Aorta (tissue), 5 donors: ENCODE measurements at regions of chr16 and their contacts with region 1.

Region 1: GRCh38 chr16:78503602-78504001 is 404.1 kb downstream of the WWOX start:
- DNase-seq: no peak
- ATAC-seq: no peak
- H3K4me3 ChIP-seq: no peak overlapping the region
- H3K27ac ChIP-seq: no peak overlapping the region
- H3K4me1 ChIP-seq: peaks cover 2 to 4% of the 10 kb centered on the region in 2 donors
- H3K27me3 ChIP-seq: no peaks in the 10 kb centered on the region

Region 2: DNA sequence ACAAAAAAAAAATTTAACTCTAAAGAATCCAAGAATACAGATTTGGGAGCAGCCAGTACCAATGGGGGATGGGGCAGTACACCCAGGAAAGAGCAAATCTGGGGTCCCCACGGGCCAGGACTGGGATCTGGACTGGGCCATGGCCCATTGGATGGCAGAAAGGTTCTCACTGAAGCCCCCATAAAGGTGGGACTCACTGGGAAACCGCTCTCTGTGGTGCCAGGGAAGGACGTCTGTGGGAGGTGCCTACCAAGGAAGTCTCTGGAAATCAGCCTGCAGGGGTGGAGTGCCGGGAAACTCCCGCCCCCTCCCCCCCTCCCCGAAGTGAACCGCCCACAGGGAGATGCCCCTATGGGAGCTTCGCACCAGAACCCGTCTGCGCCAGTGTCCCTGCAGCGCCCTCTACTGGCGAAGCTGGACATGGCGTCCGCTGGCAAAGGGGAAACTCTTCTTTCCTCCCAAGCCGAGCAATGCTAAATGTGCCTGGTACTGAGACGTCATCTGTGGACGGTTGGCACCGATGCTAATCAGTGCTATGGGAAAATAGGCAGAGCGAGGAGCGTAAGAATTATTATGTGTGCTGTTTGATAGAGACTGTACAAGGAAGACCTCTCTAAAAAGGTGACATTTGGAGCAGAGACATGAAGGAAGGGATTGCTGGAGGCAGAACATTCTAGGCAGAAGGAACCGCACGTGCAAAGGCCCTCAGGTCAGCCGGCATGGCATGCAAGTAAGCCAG is 266.9 kb after region 1 on chr16:
- intact Hi-C with region 1: loop called (anchors 5 kb)
- DNase-seq: peak; percentile 83 to 90
- ATAC-seq: peak; percentile 71
- H3K4me3 ChIP-seq: no peak overlapping the region
- H3K27ac ChIP-seq: no peak overlapping the region
- H3K4me1 ChIP-seq: no peaks in the 10 kb centered on the region
- H3K27me3 ChIP-seq: no peaks in the 10 kb centered on the region